H1 (cell line): ENCODE measurements at regions of chr1 and their contacts with region 1.

Region 1: DNA sequence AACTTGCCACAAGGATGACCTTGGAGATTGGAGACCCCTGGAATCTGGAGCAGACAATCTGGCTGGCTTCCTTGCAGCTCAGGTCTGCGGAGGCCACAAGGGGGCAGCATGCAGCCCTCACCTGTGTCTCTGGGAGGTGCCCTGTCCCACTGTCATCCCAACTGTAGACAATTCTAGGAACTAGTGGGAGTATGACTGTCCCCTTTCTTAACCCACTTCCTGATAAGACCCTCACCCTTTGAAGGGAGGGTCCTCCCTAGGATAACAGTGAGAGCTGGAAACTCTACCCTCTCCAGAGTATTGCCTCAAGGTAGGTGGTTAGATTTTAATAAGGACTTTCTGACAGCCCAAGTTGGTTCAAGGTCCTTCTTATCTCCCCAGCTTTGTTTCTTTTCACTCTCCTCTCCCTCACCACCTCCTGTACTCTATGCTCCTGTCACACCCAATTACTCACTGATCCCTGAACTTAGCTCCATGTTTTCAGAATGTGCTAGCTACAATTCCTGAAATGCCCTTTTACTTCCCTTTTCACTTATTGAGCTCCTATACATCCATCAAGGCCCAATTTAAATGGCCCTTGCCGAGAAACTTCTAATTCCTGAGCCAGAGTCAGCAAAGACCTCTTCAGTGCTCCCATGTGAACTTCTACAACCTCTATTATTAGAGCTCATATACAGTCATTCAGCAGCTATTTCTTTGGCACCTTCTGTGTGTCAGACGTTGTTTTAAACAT is 9.2 kb upstream of the KCNQ4 start:
- DNase-seq: peak; percentile 54 to 88
- H3K4me3 ChIP-seq: no peak overlapping the region
- H3K27ac ChIP-seq: no peak overlapping the region
- H3K4me1 ChIP-seq: peaks cover 4 to 30% (median 12%) of the 10 kb centered on the region in 4 experiments
- H3K27me3 ChIP-seq: no peaks in the 10 kb centered on the region
- CTCF ChIP-seq: peak; percentile 90 to 94 (median 94)
- EP300 ChIP-seq: no peak
- POLR2A ChIP-seq: no peak
- RAD21 ChIP-seq: peak; percentile 70 to 81

Region 2: DNA sequence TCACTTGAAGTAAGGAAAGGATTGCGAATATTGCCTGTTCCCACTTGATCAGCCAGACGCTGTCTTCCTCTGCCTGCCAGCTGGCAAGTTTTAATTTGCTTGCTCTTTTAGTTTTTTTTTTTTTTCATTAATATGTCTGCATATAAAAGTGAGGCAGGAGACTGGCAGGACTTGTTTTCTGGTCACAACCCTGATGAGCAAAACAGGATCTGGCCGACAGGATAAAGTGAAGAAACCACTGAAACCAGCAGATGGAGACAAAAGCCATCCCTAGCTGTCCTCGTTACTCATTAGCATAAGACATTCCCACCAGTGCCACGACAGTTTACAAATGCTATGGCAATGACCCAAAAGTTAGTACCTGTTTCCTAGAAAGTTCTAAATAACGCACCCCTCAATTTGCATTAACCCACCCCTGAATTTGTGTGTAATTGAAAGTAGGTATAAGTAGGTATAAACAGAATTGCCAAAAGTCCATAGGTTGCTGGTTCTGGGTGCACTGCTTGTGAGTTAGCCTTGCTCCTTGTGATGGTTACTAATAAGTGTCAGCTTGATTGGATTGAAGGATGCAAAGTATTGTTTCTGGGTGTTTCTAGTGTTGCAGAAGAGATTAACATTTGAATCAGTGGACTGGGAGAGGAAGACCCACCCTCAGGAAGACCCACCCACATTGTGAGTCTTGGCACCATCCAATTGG is 182.2 kb before region 1 on chr1:
- CTCF ChIA-PET with region 1: no interaction called
- POLR2A ChIA-PET with region 1: no interaction called
- DNase-seq: no peak
- H3K4me3 ChIP-seq: no peak overlapping the region
- H3K27ac ChIP-seq: no peak overlapping the region
- H3K4me1 ChIP-seq: no peaks in the 10 kb centered on the region
- H3K27me3 ChIP-seq: no peaks in the 10 kb centered on the region
- CTCF ChIP-seq: peak in 2 of 3 experiments; percentile 38 to 53; a peak in 2 of 4 replicates
- EP300 ChIP-seq: no peak
- POLR2A ChIP-seq: no peak
- RAD21 ChIP-seq: peak; percentile 55 to 59

Region 3: DNA sequence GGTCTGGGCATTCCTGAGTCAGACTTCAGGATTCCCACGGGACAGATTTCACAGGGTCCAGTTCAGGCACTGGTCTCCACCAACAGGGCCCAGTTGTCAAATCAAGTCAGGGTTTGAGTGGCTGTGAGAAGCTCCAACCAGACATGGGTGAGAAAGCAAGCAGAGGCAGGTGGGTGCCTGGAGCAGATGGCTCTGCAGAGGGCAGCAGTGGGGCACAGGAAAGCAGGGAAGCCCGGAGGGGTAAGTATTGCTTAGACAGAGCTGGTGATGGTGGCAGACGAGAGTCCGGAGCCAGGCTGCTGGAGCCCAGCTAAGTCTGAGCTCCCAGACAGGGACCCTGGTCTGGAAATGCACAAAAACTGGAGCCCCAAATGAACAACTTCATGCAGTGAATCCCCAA is 149.4 kb before region 1 on chr1:
- CTCF ChIA-PET with region 1: interaction called, 10 read pairs
- POLR2A ChIA-PET with region 1: no interaction called
- DNase-seq: no peak
- H3K4me3 ChIP-seq: no peak overlapping the region
- H3K27ac ChIP-seq: no peak overlapping the region
- H3K4me1 ChIP-seq: no peaks in the 10 kb centered on the region
- H3K27me3 ChIP-seq: no peaks in the 10 kb centered on the region; a peak in 1 of 7 replicates
- CTCF ChIP-seq: peak; percentile 53 to 60 (median 58)
- EP300 ChIP-seq: no peak
- POLR2A ChIP-seq: no peak
- RAD21 ChIP-seq: peak; percentile 57 to 63

Region 4: DNA sequence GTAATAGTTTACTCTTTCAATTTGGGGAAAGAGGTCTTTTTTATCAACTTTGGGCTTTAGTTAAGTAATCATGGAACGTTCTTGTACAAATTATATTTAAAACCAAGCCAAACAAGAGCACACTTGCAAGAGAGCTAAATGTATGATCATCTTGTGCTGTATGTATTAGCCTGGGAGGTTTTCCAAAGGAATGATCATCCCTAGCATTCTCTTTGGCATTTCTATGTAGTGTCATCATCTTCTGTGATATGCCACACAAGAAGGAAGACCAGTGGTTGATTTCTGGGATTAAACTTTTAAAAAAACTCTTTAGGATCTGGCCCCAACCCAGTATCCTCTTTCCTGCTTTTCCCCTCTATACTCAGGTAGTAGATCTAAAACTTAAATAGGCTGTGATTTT is 29.3 kb before region 1 on chr1:
- CTCF ChIA-PET with region 1: interaction called, 10 read pairs
- POLR2A ChIA-PET with region 1: interaction called, 4 read pairs
- DNase-seq: no peak
- H3K4me3 ChIP-seq: no peak overlapping the region
- H3K27ac ChIP-seq: no peak overlapping the region
- H3K4me1 ChIP-seq: no peaks in the 10 kb centered on the region
- H3K27me3 ChIP-seq: no peaks in the 10 kb centered on the region
- CTCF ChIP-seq: no peak
- EP300 ChIP-seq: no peak
- POLR2A ChIP-seq: no peak
- RAD21 ChIP-seq: no peak

Region 5: GRCh38 chr1:40802078-40802741 is 27.8 kb after region 1 on chr1:
- CTCF ChIA-PET with region 1: interaction called, 325 read pairs
- POLR2A ChIA-PET with region 1: interaction called, 3 read pairs
- DNase-seq: peak; percentile 80 to 92
- H3K4me3 ChIP-seq: peak overlapping the region; percentile 17 to 51 (median 28); a peak in 6 of 8 replicates
- H3K27ac ChIP-seq: no peak overlapping the region
- H3K4me1 ChIP-seq: peaks cover 9 to 33% (median 25%) of the 10 kb centered on the region in 4 experiments
- H3K27me3 ChIP-seq: peaks cover 0 to 6% (median 4%) of the 10 kb centered on the region in 4 experiments; a peak in 3 of 7 replicates
- CTCF ChIP-seq: no peak
- EP300 ChIP-seq: no peak
- POLR2A ChIP-seq: no peak
- RAD21 ChIP-seq: no peak

Region 6: GRCh38 chr1:40825996-40826395 is 51.6 kb after region 1 on chr1:
- CTCF ChIA-PET with region 1: interaction called, 36 read pairs
- POLR2A ChIA-PET with region 1: interaction called, 5 read pairs
- DNase-seq: no peak
- H3K4me3 ChIP-seq: no peak overlapping the region
- H3K27ac ChIP-seq: no peak overlapping the region
- H3K4me1 ChIP-seq: peaks cover 10 to 20% (median 14%) of the 10 kb centered on the region in 4 experiments
- H3K27me3 ChIP-seq: no peaks in the 10 kb centered on the region
- CTCF ChIP-seq: no peak
- EP300 ChIP-seq: no peak
- POLR2A ChIP-seq: no peak
- RAD21 ChIP-seq: no peak

Region 7: GRCh38 chr1:40849801-40850592 is 75.6 kb after region 1 on chr1:
- CTCF ChIA-PET with region 1: interaction called, 155 read pairs
- POLR2A ChIA-PET with region 1: no interaction called
- DNase-seq: peak in 1 of 2 experiments; percentile 89
- H3K4me3 ChIP-seq: no peak overlapping the region
- H3K27ac ChIP-seq: no peak overlapping the region
- H3K4me1 ChIP-seq: no peaks in the 10 kb centered on the region; a peak in 1 of 7 replicates
- H3K27me3 ChIP-seq: no peaks in the 10 kb centered on the region
- CTCF ChIP-seq: peak; percentile 85 to 97 (median 96)
- EP300 ChIP-seq: no peak
- POLR2A ChIP-seq: no peak
- RAD21 ChIP-seq: peak; percentile 89 to 90

Region 8: DNA sequence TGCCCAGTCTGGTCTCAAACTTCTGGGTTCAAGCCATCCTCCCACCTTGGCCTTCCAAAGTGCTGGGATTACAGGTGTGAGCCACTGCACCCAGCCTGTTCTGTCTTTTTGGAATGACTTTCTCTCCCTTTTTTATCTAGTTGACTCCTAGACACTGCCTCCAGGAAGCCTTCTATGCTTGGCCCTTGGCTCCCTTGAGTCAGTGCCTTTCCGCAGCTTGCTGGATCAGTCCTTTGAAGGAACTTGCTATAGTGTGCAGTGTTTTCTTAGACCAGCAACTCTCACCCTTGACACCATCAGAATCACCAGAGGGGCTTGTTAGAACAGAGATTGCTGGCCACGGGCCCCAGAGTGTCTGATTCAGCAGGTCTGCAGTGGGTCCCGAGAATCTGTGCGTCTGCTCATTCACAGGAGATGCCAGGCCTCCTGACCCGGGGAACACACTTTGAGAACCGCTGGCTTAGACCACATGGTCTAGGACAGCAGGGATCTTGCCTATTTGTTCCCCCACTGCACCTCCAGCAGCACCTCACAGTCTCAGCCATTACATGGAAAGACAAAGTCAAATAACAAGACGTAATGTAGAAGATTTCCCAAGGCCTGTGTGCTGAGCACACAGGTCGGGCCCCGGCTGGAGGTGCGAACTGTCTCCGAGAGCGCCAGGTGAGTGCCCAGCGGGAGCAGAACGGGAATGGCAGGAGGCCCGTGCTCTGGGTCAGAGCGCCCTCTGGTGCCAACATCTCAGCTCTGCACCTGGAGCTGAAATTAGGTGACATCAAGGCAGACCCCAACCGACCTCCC is 177.7 kb after region 1 on chr1:
- CTCF ChIA-PET with region 1: interaction called, 94 read pairs
- POLR2A ChIA-PET with region 1: interaction called, 3 read pairs
- DNase-seq: peak; percentile 67 to 93
- H3K4me3 ChIP-seq: no peak overlapping the region
- H3K27ac ChIP-seq: no peak overlapping the region
- H3K4me1 ChIP-seq: peaks cover 0 to 2% (median 0%) of the 10 kb centered on the region in 4 experiments; a peak in 3 of 7 replicates
- H3K27me3 ChIP-seq: no peaks in the 10 kb centered on the region; a peak in 2 of 7 replicates
- CTCF ChIP-seq: peak; percentile 94 to 98 (median 97)
- EP300 ChIP-seq: no peak
- POLR2A ChIP-seq: no peak
- RAD21 ChIP-seq: peak; percentile 99